ENCODE measurements at regions of chr7 and their contacts with region 1.

Region 1: GRCh38 chr7:94848531-94848930 is 58.9 kb upstream of the PPP1R9A start:
- DNase-seq: no peak
- H3K4me3 ChIP-seq: no peak overlapping the region
- H3K27ac ChIP-seq: no peak overlapping the region
- H3K4me1 ChIP-seq: no peaks in the 10 kb centered on the region
- H3K27me3 ChIP-seq: no peaks in the 10 kb centered on the region
- CTCF ChIP-seq: no peak

Region 2: DNA sequence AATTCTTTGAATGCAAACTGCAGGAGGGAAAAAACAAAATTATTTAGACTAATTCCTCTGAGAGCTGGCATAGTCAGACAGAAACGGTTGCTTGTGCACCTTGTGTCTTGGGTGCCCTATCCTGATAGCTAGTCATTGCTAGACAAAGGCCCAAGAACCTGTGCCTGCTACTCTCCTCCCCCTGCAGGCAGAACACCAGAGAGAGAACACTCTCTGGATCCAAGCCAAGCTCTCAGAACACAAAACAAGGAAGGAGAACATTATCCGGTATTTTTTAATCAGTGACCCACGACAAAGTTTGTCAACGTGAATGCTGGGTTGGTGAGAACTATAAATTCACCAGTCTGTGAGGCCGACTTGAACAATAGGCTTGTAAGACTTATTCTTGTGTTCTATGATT is 40.0 kb after region 1 on chr7:
- CTCF ChIA-PET with region 1: no interaction called
- POLR2A ChIA-PET with region 1: interaction called, 14 read pairs
- intact Hi-C with region 1: no loop called
- DNase-seq: peak; percentile 63
- H3K4me3 ChIP-seq: no peak overlapping the region
- H3K27ac ChIP-seq: no peak overlapping the region
- H3K4me1 ChIP-seq: peaks cover 4% of the 10 kb centered on the region
- H3K27me3 ChIP-seq: no peaks in the 10 kb centered on the region
- CTCF ChIP-seq: peak; percentile 40

Region 3: GRCh38 chr7:94901981-94902380 is 53.5 kb after region 1 on chr7:
- CTCF ChIA-PET with region 1: no interaction called
- POLR2A ChIA-PET with region 1: no interaction called
- intact Hi-C with region 1: no loop called
- DNase-seq: no peak
- H3K4me3 ChIP-seq: no peak overlapping the region
- H3K27ac ChIP-seq: no peak overlapping the region
- H3K4me1 ChIP-seq: peaks cover 2% of the 10 kb centered on the region
- H3K27me3 ChIP-seq: no peaks in the 10 kb centered on the region
- CTCF ChIP-seq: no peak